ENCODE measurements at regions of chr15 and their contacts with region 1.

Region 1: DNA sequence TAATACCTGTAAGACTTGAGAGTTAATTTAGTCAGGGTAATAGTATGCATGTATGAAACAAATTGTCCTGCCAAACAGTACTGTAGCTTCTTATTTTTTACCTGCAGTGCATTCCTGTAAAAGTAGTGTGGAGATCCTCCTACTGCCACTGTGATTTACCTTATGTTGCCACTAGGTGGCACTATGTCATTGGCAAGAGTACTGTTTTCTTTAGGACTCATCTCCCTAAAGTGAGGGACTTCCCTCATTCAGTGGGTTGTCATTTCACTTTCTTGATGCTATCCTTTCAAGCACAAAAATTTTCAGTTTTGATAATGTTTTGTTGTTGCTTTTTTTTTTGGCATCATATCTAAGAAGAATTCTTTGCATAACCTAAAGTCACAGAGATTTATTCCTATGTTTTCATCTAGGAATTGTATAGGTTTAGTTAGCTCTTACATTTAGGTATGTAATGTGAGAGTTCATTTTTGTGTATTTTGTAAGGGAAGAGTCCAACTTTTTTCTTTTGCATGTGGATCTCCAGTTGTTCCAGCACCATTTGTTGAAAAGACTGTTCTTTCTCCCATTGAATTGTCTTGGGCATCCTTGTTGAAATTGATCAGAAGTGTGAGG is 105.7 kb downstream of the AKAP13 start:
- DNase-seq: peak; percentile 92
- H3K4me3 Mint-ChIP-seq: no peak overlapping the region
- H3K27ac Mint-ChIP-seq: no peak overlapping the region
- H3K4me1 Mint-ChIP-seq: peaks cover 41% of the 10 kb centered on the region
- H3K27me3 Mint-ChIP-seq: no peaks in the 10 kb centered on the region

Region 2: DNA sequence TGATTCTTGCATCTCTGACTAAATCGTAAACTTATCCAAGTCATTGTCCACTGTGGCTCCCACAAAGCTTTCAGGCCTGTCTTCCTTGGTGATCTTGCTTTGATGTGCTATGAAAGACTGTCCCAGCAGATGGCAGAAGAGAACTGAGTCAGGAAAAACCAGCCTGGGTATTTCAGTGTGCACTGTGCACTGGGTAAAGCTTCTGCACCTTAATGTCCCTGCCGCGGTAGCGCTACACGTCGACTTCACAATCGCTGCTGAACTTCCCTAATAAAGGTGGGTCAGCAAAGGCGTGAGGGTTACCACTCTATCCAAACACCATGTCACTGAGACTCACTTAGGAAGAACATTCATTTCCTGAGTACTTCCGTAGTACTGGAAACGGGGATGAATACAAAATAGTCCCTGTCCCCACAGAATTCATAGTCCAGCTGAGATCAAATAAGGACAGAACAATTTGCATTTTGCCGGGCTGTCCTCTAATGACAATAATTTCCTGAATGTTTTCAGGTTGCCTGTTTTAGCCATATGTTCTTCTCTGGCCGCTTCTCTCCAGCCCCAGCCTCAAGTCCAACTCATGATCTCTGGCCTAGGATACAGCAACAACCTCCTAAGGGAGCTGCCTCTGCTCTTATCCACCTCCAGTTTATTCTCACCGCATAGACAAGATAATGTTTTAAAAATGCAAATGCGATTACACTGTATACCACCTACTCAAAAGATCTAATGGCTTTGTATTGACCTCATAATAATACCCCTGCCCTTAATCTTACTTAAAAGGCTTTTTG is 189.3 kb before region 1 on chr15:
- intact Hi-C with region 1: loop called (anchors 5 kb)
- DNase-seq: peak; percentile 93
- H3K4me3 Mint-ChIP-seq: peak overlapping the region; percentile 60
- H3K27ac Mint-ChIP-seq: no peak overlapping the region
- H3K4me1 Mint-ChIP-seq: peaks cover 15% of the 10 kb centered on the region
- H3K27me3 Mint-ChIP-seq: no peaks in the 10 kb centered on the region

Region 3: GRCh38 chr15:85723960-85724945 is 238.2 kb after region 1 on chr15:
- intact Hi-C with region 1: loop called (anchors 5 kb)
- DNase-seq: peak; percentile 67
- H3K4me3 Mint-ChIP-seq: peak overlapping the region; percentile 67
- H3K27ac Mint-ChIP-seq: peak overlapping the region; percentile 90
- H3K4me1 Mint-ChIP-seq: peaks cover 30% of the 10 kb centered on the region
- H3K27me3 Mint-ChIP-seq: no peaks in the 10 kb centered on the region

Region 4: DNA sequence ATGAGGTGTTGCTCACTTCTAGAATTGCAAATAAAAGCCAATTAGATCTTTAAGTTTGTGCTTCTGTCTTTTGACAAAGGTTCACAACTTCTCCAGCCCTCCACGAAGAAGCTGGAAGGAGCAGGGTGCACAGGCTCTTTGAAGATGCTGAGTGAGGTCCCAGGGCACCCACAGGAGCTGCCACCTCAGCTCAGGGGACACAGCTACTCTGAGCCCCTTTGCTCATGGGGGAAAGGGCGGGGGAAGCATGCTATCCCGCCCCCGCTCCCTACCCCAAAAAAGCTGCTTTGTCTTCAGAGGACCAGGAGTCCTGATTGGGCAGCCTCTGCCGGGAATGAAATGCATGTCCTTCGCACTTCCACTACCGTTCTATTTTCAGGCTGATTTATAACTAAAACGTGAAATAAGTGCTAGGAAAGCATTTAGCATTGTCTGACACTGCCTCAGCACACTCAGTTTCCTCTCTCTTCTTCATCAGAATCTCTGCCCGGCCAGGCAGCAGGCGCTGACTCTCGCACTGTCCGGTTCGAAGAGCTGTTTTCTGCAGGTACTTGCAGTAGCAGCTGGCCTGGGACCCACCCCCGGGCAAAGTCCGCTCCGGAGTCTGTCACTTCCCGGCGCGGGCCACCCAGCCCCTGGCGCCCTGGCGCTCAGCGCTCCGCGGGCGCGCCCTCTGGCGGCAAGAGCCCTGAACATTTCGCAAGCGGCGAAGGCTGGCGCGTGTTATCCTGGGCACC is 354.2 kb after region 1 on chr15:
- intact Hi-C with region 1: loop called (anchors 5 kb)
- DNase-seq: peak; percentile 95
- H3K4me3 Mint-ChIP-seq: peak overlapping the region; percentile 76
- H3K27ac Mint-ChIP-seq: no peak overlapping the region
- H3K4me1 Mint-ChIP-seq: peaks cover 10% of the 10 kb centered on the region
- H3K27me3 Mint-ChIP-seq: peaks cover 14% of the 10 kb centered on the region